MCF 10A (cell line): ENCODE measurements at regions of chr17 and their contacts with region 1.

Region 1: GRCh38 chr17:56893216-56893863 is 20.5 kb downstream of the TRIM25 start:
- DNase-seq: no peak
- H3K4me3 Mint-ChIP-seq: no peak overlapping the region
- H3K27ac Mint-ChIP-seq: no peak overlapping the region
- H3K4me1 Mint-ChIP-seq: no peaks in the 10 kb centered on the region
- H3K27me3 Mint-ChIP-seq: no peaks in the 10 kb centered on the region
- CTCF ChIP-seq: no peak

Region 2: GRCh38 chr17:56876766-56877179 is 16.6 kb before region 1 on chr17:
- CTCF ChIA-PET with region 1: no interaction called
- POLR2A ChIA-PET with region 1: no interaction called
- intact Hi-C with region 1: no loop called
- DNase-seq: no peak
- H3K4me3 Mint-ChIP-seq: no peak overlapping the region
- H3K27ac Mint-ChIP-seq: no peak overlapping the region
- H3K4me1 Mint-ChIP-seq: no peaks in the 10 kb centered on the region
- H3K27me3 Mint-ChIP-seq: no peaks in the 10 kb centered on the region
- CTCF ChIP-seq: no peak

Region 3: GRCh38 chr17:56908001-56908542 is 14.7 kb after region 1 on chr17:
- CTCF ChIA-PET with region 1: interaction called, 12 read pairs
- POLR2A ChIA-PET with region 1: interaction called, 8 read pairs
- intact Hi-C with region 1: no loop called
- DNase-seq: no peak
- H3K4me3 Mint-ChIP-seq: no peak overlapping the region
- H3K27ac Mint-ChIP-seq: peak overlapping the region; percentile 72
- H3K4me1 Mint-ChIP-seq: peaks cover 23% of the 10 kb centered on the region
- H3K27me3 Mint-ChIP-seq: no peaks in the 10 kb centered on the region
- CTCF ChIP-seq: no peak

Region 4: DNA sequence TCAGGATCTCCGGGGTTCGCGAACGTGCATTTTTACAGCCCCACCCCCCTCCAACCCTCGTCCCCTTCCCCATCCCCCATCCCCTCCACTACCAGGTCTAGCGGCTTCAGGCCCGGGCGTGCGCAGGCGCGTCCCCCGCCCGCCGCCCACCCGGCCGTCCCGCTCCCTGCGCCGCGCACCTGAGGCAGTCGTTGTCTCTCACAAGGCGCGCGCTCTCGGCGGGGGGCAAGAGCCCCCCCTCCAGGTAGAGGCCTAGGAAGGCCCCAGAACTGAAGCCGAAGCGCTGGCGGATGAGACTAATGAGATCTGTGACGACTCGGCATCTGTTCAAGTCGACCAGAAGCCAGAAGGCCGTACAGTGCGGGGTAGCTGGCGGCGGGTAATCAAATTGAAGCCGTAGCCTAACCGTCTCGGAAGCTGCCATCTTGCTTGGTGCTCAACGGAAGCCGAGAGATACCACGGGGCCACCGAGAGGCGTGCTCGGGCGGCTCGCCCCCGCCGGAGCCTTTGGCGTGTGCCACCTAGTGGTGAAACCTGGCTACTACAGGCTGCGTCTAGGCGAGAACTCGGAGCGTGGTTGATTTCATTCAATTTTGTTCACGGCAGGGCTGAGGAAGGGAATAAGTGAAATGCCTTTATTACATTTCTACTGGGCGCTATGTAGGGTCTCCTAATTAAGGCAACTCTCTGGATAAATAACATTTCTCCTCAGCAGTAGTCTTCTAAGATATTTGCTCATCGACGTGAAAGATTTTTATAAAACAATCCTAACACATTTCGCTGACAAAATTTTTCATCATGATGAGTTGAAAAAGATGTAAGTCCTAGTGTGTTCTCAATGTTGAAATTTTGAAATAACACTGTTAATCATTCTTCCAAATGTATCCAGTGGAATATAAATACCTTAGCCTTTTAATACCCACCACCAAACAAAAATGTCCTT is 67.5 kb after region 1 on chr17 and contains the start of gene COIL:
- CTCF ChIA-PET with region 1: no interaction called
- POLR2A ChIA-PET with region 1: no interaction called
- intact Hi-C with region 1: no loop called
- DNase-seq: peak; percentile 89
- H3K4me3 Mint-ChIP-seq: peak within 1 kb of the TSS; percentile 73
- H3K27ac Mint-ChIP-seq: peak within 1 kb of the TSS; percentile 46
- H3K4me1 Mint-ChIP-seq: peaks cover 5% of the 10 kb centered on the region
- H3K27me3 Mint-ChIP-seq: no peaks in the 10 kb centered on the region
- CTCF ChIP-seq: peak; percentile 94
- total RNA-seq, gene COIL: 15.4 and 17.2 TPM in 2 replicates